ENCODE measurements at regions of chrX and their contacts with region 1.

Region 1: GRCh38 chrX:65926095-65927019 is 113.5 kb downstream of the VSIG4 start:
- DNase-seq: peak in 7 of 9 donors; percentile 13 to 75 (median 54)
- ATAC-seq: peak; percentile 75
- H3K4me3 ChIP-seq: peak overlapping the region; percentile 31
- H3K4me3 Mint-ChIP-seq: peak overlapping the region; percentile 37 to 84 (median 70)
- H3K27ac ChIP-seq: peak overlapping the region; percentile 37
- H3K27ac Mint-ChIP-seq: peak overlapping the region; percentile 15 to 93 (median 73)
- H3K4me1 ChIP-seq: peaks cover 22 to 32% of the 10 kb centered on the region in 2 donors
- H3K4me1 Mint-ChIP-seq: peaks cover 33 to 71% (median 61%) of the 10 kb centered on the region in 7 donors
- H3K27me3 ChIP-seq: no peaks in the 10 kb centered on the region
- H3K27me3 Mint-ChIP-seq: no peaks in the 10 kb centered on the region

Region 2: DNA sequence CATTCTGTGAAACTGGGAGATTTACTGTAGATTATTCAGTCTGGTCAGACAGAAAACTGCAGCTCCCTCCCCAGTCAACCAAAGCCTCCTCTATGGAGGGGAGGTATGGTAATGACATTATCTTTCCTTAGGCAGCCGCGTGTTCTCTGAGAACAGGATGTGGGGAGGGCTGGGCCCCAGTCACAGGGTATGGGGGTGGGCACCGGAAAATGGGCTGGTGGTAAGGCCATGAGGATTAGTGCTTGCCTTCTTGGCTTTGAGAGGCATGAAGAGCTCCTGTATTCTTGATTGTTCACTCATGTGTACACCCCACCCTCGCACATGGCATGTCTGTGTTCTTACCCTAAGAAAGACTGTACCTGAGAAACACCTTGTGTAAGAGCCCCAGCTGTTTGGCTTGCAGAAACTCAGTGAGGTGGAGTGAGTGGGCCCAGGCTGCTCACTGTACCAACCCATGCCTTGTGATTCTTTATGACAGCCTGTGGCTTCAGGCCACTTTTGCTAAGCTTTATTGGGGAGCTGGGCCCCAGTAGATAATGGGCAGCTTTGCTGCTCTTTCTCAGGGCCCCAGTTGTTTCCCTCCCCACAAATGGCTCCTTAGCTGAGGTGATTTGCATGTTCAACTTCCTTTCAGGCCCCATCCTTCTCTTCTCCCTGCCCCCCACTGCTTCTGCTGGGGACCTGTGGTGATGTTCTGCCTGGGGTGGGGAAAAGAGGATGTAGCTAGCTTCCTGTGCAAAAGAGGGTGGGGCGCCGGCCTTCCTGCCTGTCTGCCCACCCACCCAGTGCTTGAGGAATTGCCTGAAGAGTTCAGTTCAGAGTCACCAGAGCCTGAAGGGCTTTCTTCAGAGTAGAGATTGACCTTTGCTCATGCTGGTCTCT is 228.2 kb before region 1 on chrX:
- CTCF ChIA-PET with region 1: no interaction called
- POLR2A ChIA-PET with region 1: no interaction called
- intact Hi-C with region 1: loop called in 1 of 2 experiments (anchors 10 kb)
- DNase-seq: peak; percentile 8 to 81 (median 78)
- ATAC-seq: peak; percentile 84
- H3K4me3 ChIP-seq: peak overlapping the region; percentile 36
- H3K4me3 Mint-ChIP-seq: peak overlapping the region; percentile 73 to 93 (median 86)
- H3K27ac ChIP-seq: peak overlapping the region; percentile 68
- H3K27ac Mint-ChIP-seq: peak overlapping the region; percentile 91 to 98 (median 93)
- H3K4me1 ChIP-seq: peaks cover 70 to 77% of the 10 kb centered on the region in 2 donors
- H3K4me1 Mint-ChIP-seq: peaks cover 34 to 100% (median 85%) of the 10 kb centered on the region in 7 donors
- H3K27me3 ChIP-seq: no peaks in the 10 kb centered on the region
- H3K27me3 Mint-ChIP-seq: no peaks in the 10 kb centered on the region

Region 3: GRCh38 chrX:65750674-65751469 is 175.5 kb before region 1 on chrX:
- CTCF ChIA-PET with region 1: interaction called, 3 read pairs
- POLR2A ChIA-PET with region 1: no interaction called
- intact Hi-C with region 1: loop called in 1 of 2 experiments (anchors 5 kb)
- DNase-seq: peak in 7 of 9 donors; percentile 14 to 49 (median 34)
- ATAC-seq: peak; percentile 77
- H3K4me3 ChIP-seq: no peak overlapping the region
- H3K4me3 Mint-ChIP-seq: peak overlapping the region; percentile 55 to 81 (median 74)
- H3K27ac ChIP-seq: no peak overlapping the region
- H3K27ac Mint-ChIP-seq: peak overlapping the region; percentile 57 to 85 (median 76)
- H3K4me1 ChIP-seq: peaks cover 15 to 21% of the 10 kb centered on the region in 2 donors
- H3K4me1 Mint-ChIP-seq: peaks cover 30 to 80% (median 63%) of the 10 kb centered on the region in 7 donors
- H3K27me3 ChIP-seq: no peaks in the 10 kb centered on the region
- H3K27me3 Mint-ChIP-seq: no peaks in the 10 kb centered on the region

Region 4: GRCh38 chrX:65866146-65866545 is 60.2 kb before region 1 on chrX:
- CTCF ChIA-PET with region 1: no interaction called
- POLR2A ChIA-PET with region 1: no interaction called
- intact Hi-C with region 1: loop called in 1 of 2 experiments (anchors 1 kb)
- DNase-seq: peak in 3 of 9 donors; percentile 21 to 36 (median 30)
- ATAC-seq: peak; percentile 81
- H3K4me3 ChIP-seq: no peak overlapping the region
- H3K4me3 Mint-ChIP-seq: peak overlapping the region in 2 of 10 donors; percentile 18 to 57
- H3K27ac ChIP-seq: no peak overlapping the region
- H3K27ac Mint-ChIP-seq: peak overlapping the region in 3 of 9 donors; percentile 36 to 75 (median 73)
- H3K4me1 ChIP-seq: peaks cover 10 to 19% of the 10 kb centered on the region in 2 donors
- H3K4me1 Mint-ChIP-seq: peaks cover 18 to 52% (median 40%) of the 10 kb centered on the region in 7 donors
- H3K27me3 ChIP-seq: no peaks in the 10 kb centered on the region
- H3K27me3 Mint-ChIP-seq: no peaks in the 10 kb centered on the region

Region 5: DNA sequence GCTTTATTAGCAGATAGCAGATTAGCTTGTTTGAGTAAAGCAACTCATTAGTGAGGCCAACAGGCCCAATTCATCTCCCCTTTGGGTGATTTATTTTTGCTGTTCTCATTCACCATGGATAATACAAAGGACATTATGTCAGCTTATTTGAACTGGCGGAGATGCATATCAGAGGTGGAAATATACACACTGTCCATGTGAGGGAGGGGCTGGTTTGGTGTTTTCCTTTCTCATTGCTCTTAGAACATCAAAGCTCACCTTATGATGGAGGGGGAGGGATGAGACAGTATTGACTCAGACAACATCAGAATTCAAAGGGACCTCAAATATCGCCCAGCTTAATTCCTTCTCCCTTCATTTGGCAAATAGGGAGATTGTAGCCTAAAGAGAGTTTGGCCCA is 39.5 kb before region 1 on chrX:
- CTCF ChIA-PET with region 1: no interaction called
- POLR2A ChIA-PET with region 1: no interaction called
- intact Hi-C with region 1: loop called in 1 of 2 experiments (anchors 1 kb)
- DNase-seq: no peak
- ATAC-seq: no peak
- H3K4me3 ChIP-seq: no peak overlapping the region
- H3K4me3 Mint-ChIP-seq: no peak overlapping the region
- H3K27ac ChIP-seq: no peak overlapping the region
- H3K27ac Mint-ChIP-seq: no peak overlapping the region
- H3K4me1 ChIP-seq: peaks cover 0 to 7% of the 10 kb centered on the region in 2 donors
- H3K4me1 Mint-ChIP-seq: peaks cover 10 to 25% (median 18%) of the 10 kb centered on the region in 7 donors
- H3K27me3 ChIP-seq: no peaks in the 10 kb centered on the region
- H3K27me3 Mint-ChIP-seq: peaks cover 0 to 2% (median 0%) of the 10 kb centered on the region in 5 donors